H1 (cell line): ENCODE measurements at regions of chr1 and their contacts with region 1.

Region 1: GRCh38 chr1:1906185-1907097 is 8.6 kb upstream of the CALML6 start:
- DNase-seq: peak in 1 of 2 experiments; percentile 89
- H3K4me3 ChIP-seq: no peak overlapping the region
- H3K27ac ChIP-seq: no peak overlapping the region
- H3K4me1 ChIP-seq: peaks cover 0 to 10% (median 5%) of the 10 kb centered on the region in 4 experiments; a peak in 5 of 7 replicates
- H3K27me3 ChIP-seq: no peaks in the 10 kb centered on the region; a peak in 1 of 7 replicates
- CTCF ChIP-seq: peak in 2 of 3 experiments; percentile 93 to 99; a peak in 3 of 4 replicates
- EP300 ChIP-seq: no peak
- POLR2A ChIP-seq: no peak
- RAD21 ChIP-seq: peak; percentile 96 to 97

Region 2: DNA sequence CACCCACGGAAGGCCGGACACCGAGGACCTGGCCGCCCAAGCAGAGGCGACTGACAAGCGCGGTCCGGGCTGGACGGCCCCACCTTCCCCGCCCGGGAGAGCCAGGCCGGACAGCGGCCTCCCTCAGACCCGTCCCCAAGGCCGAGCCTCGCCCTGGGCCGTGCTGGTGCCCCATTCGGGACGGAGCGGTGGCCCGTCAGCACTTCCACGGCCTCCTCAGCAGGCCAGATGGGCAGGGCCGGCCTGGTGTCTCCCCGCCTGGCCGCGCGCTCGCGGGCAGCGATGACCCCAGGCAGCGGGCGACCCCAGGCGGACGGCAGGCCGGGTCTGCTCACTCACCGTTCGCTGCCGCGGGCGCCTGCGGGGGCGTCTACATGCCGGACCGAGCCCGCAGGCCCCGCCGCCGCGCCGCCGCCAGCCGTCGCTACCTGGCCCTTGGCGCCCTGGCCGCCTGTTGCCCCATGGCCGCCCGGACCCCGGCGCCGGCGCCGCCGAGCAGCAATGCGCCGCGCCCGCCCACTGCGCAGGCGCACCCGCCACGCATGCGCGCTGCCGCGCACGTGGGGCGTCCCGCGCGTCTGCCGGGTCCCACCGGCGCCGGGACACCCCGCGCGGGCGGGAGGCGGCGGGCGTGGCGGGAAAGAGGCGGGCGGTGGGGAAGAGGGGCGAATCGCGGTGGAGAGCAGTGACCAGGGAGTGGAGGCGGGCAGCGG is 128.3 kb before region 1 on chr1 and contains the start of gene NADK:
- CTCF ChIA-PET with region 1: interaction called, 24 read pairs
- POLR2A ChIA-PET with region 1: interaction called, 8 read pairs
- DNase-seq: peak in 1 of 2 experiments; percentile 79
- H3K4me3 ChIP-seq: peak within 1 kb of the TSS; percentile 66 to 91 (median 77)
- H3K27ac ChIP-seq: peak within 1 kb of the TSS; percentile 76
- H3K4me1 ChIP-seq: peaks cover 3 to 44% (median 28%) of the 10 kb centered on the region in 4 experiments
- H3K27me3 ChIP-seq: no peaks in the 10 kb centered on the region
- CTCF ChIP-seq: no peak
- EP300 ChIP-seq: no peak
- POLR2A ChIP-seq: no peak
- RAD21 ChIP-seq: no peak
- total RNA-seq, gene NADK: 80.1 and 89.7 TPM in 2 replicates

Region 3: DNA sequence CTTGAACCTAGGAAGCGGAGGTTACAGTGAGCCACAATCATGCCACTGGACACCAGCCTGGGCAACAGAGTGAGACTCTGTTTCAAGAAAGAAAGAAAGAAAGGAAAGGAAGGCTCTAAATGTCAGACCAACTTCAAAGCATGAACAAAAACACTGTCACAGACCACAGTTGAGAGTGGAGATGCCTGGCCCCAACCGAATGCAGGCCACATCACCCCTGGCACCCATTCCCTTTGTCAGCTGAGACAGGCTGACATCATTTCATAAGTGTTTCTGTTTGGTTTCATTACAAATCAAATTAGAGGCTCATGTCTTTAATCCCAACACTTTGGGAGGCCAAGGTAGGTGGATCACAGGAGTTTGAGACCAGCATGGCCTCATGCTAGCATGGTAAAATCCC is 99.6 kb before region 1 on chr1:
- CTCF ChIA-PET with region 1: interaction called, 10 read pairs
- POLR2A ChIA-PET with region 1: no interaction called
- DNase-seq: no peak
- H3K4me3 ChIP-seq: no peak overlapping the region
- H3K27ac ChIP-seq: no peak overlapping the region
- H3K4me1 ChIP-seq: no peaks in the 10 kb centered on the region
- H3K27me3 ChIP-seq: no peaks in the 10 kb centered on the region
- CTCF ChIP-seq: no peak
- EP300 ChIP-seq: no peak
- POLR2A ChIP-seq: no peak
- RAD21 ChIP-seq: no peak

Region 4: GRCh38 chr1:1858382-1859086 is 47.9 kb before region 1 on chr1:
- CTCF ChIA-PET with region 1: interaction called, 10 read pairs
- POLR2A ChIA-PET with region 1: interaction called, 4 read pairs
- DNase-seq: no peak
- H3K4me3 ChIP-seq: no peak overlapping the region
- H3K27ac ChIP-seq: no peak overlapping the region
- H3K4me1 ChIP-seq: peaks cover 0 to 8% (median 4%) of the 10 kb centered on the region in 4 experiments; a peak in 3 of 7 replicates
- H3K27me3 ChIP-seq: no peaks in the 10 kb centered on the region
- CTCF ChIP-seq: peak; percentile 18 to 52 (median 50); a peak in 3 of 4 replicates
- EP300 ChIP-seq: no peak
- POLR2A ChIP-seq: no peak
- RAD21 ChIP-seq: peak; percentile 17 to 42; a peak in 2 of 4 replicates

Region 5: DNA sequence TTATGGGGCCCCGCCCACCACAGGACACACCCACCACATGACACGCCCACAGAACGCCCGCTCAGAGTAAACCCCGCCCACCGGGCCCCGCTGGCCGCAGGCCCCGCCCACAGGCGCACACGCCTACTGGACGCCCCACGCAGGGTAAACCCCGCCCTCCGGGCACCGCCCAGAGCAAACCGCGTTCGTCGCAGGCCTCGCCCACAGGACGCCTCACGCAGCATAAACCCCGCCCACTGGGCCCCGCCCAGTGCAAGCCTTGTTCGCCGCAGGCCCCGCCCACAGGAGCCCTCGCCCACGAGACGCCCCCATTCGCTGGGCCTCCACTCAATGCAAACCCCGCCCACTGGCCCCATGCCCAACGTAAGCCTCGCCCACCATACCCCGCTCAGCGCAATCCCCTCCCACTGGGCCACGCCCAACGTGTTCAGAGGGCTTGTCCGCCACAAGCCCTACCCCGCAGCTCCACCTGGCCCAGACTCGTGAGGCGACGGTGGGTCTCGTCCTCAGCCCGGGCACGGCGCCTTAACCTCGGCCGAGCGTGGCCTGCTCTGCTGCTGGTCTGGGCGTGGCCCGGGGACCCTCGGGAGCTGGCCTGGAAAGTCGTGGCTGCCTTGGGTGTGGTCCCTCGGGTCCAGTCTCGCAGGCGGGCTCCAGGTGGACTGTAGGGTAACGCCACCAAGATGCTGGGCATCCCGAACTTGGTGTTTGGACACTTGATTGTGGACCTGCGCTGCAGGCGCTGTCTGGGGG is 13.0 kb after region 1 on chr1:
- CTCF ChIA-PET with region 1: interaction called, 12 read pairs
- POLR2A ChIA-PET with region 1: interaction called, 10 read pairs
- DNase-seq: peak; percentile 100
- H3K4me3 ChIP-seq: peak overlapping the region in 3 of 4 experiments; percentile 34 to 68 (median 40); a peak in 6 of 8 replicates
- H3K27ac ChIP-seq: no peak overlapping the region
- H3K4me1 ChIP-seq: peaks cover 0 to 19% (median 12%) of the 10 kb centered on the region in 4 experiments; a peak in 6 of 7 replicates
- H3K27me3 ChIP-seq: peaks cover 0 to 2% (median under 1%) of the 10 kb centered on the region in 4 experiments; a peak in 2 of 7 replicates
- CTCF ChIP-seq: no peak
- EP300 ChIP-seq: no peak
- POLR2A ChIP-seq: no peak; a peak in 1 of 3 replicates
- RAD21 ChIP-seq: no peak